Activated CD8-positive, alpha-beta T cell treated with anti-CD3 and anti-CD28 coated beads, Interleukin-2, amount 10 ng/mL, durations not matched to agents 7 days and 5 days (primary cell): ENCODE measurements at regions of chrX and their contacts with region 1.

Region 1: GRCh38 chrX:123779908-123780396 is 47.1 kb upstream of the THOC2 start:
- DNase-seq: no peak
- ATAC-seq: no peak
- H3K4me3 Mint-ChIP-seq: no peak overlapping the region
- H3K27ac Mint-ChIP-seq: no peak overlapping the region
- H3K4me1 Mint-ChIP-seq: peaks cover 4% of the 10 kb centered on the region
- H3K27me3 Mint-ChIP-seq: peaks cover 3% of the 10 kb centered on the region

Region 2: GRCh38 chrX:123764967-123765871 is 14.7 kb before region 1 on chrX:
- CTCF ChIA-PET with region 1: interaction called, 18 read pairs
- POLR2A ChIA-PET with region 1: no interaction called
- DNase-seq: peak; percentile 58
- ATAC-seq: peak; percentile 91
- H3K4me3 Mint-ChIP-seq: peak overlapping the region; percentile 73
- H3K27ac Mint-ChIP-seq: peak overlapping the region; percentile 23
- H3K4me1 Mint-ChIP-seq: peaks cover 3% of the 10 kb centered on the region
- H3K27me3 Mint-ChIP-seq: peaks cover 2% of the 10 kb centered on the region